H1 (cell line): ENCODE measurements at regions of chr3 and their contacts with region 1.

Region 1: GRCh38 chr3:148202386-148202785 is 495.3 kb upstream of the AGTR1 start:
- DNase-seq: no peak
- H3K4me3 ChIP-seq: no peak overlapping the region
- H3K27ac ChIP-seq: no peak overlapping the region
- H3K4me1 ChIP-seq: peaks cover 0 to 3% (median 0%) of the 10 kb centered on the region in 4 experiments; a peak in 2 of 7 replicates
- H3K27me3 ChIP-seq: no peaks in the 10 kb centered on the region
- CTCF ChIP-seq: peak in 2 of 3 experiments; percentile 37 to 64; a peak in 2 of 4 replicates
- EP300 ChIP-seq: no peak
- POLR2A ChIP-seq: no peak
- RAD21 ChIP-seq: peak; percentile 57 to 61

Region 2: DNA sequence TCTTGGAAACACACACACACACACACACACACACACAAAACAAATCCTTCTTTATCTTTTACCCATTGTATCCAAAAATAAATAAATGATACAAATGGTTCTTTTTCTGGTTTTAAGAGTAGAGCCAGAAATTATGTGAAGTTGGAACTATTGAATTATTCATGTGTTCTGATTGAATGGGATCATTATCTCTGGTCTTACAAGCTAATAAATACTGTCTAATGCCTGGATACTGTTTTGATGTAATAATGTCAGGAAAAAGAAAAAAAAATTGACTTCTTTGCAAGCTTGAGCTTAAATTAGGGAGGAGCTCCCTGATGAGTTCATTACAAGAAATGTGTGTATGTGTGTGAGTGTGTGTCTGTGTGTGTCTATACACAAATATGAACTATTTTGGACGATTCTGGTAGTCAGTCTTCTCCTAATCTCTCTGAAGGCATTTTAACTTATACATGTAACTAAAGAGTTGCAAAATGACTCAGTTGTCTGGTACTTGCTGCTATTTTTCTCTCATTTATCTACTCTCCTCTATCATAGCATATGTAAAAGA is 11.9 kb before region 1 on chr3:
- CTCF ChIA-PET with region 1: interaction called, 22 read pairs
- POLR2A ChIA-PET with region 1: no interaction called
- DNase-seq: no peak
- H3K4me3 ChIP-seq: no peak overlapping the region
- H3K27ac ChIP-seq: no peak overlapping the region
- H3K4me1 ChIP-seq: no peaks in the 10 kb centered on the region
- H3K27me3 ChIP-seq: no peaks in the 10 kb centered on the region
- CTCF ChIP-seq: no peak
- EP300 ChIP-seq: no peak
- POLR2A ChIP-seq: no peak
- RAD21 ChIP-seq: no peak

Region 3: GRCh38 chr3:148229107-148229506 is 26.7 kb after region 1 on chr3:
- CTCF ChIA-PET with region 1: interaction called, 10 read pairs
- POLR2A ChIA-PET with region 1: no interaction called
- DNase-seq: no peak
- H3K4me3 ChIP-seq: no peak overlapping the region
- H3K27ac ChIP-seq: no peak overlapping the region
- H3K4me1 ChIP-seq: no peaks in the 10 kb centered on the region
- H3K27me3 ChIP-seq: no peaks in the 10 kb centered on the region
- CTCF ChIP-seq: no peak
- EP300 ChIP-seq: no peak
- POLR2A ChIP-seq: no peak
- RAD21 ChIP-seq: no peak